Calu3 (cell line): ENCODE measurements at regions of chr12 and their contacts with region 1.

Region 1: DNA sequence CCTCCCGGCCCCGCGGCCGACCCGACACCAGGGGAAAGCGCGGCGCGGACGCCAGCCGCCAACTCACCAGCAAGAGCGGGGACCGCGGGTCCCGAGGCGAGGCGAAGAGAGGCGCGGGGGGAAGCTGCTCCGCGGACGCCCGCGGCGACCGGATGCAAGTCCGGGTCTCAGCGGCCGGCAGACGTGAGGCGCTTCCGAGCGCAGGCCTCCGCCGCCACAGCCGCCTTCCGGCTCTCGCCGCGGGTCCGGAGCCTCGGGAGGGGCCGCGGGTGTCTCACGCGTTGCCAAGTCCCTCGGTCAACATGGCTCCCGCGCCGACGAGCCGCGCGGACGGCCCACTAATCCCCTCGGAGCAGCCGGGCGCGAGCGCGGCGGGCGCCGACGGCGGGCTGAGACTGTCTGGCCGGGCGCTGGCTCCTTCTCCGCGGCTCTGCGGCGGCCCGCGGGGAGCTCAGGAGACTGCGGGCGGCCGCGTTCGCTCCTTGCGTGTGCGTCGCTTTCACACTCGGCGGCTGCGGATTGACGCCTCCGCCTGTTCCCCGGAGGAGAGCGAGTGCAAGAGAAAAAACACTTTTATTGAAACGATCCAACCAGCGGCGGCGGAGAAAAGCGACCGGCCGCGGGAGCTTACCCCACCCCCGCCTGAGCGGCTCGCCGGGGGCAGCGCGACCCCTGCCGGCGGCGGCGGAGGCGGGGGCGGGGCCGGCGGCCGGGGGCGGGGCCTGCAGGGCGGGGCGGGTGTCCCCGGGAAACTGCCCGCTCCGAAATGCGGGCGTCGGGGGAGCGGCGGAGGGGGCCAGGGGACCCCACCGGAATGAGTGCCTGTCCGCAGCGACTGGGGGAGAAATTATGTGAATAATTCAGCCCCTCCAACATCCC is at the start of gene CDK17:
- DNase-seq: peak; percentile 88
- H3K4me3 Mint-ChIP-seq: peak within 1 kb of the TSS; percentile 90
- H3K27ac Mint-ChIP-seq: peak within 1 kb of the TSS; percentile 60
- H3K4me1 Mint-ChIP-seq: peaks cover 26% of the 10 kb centered on the region
- H3K27me3 Mint-ChIP-seq: no peaks in the 10 kb centered on the region
- CTCF ChIP-seq: peak; percentile 15
- total RNA-seq, gene CDK17: 28.8 and 33.0 TPM in 2 replicates

Region 2: DNA sequence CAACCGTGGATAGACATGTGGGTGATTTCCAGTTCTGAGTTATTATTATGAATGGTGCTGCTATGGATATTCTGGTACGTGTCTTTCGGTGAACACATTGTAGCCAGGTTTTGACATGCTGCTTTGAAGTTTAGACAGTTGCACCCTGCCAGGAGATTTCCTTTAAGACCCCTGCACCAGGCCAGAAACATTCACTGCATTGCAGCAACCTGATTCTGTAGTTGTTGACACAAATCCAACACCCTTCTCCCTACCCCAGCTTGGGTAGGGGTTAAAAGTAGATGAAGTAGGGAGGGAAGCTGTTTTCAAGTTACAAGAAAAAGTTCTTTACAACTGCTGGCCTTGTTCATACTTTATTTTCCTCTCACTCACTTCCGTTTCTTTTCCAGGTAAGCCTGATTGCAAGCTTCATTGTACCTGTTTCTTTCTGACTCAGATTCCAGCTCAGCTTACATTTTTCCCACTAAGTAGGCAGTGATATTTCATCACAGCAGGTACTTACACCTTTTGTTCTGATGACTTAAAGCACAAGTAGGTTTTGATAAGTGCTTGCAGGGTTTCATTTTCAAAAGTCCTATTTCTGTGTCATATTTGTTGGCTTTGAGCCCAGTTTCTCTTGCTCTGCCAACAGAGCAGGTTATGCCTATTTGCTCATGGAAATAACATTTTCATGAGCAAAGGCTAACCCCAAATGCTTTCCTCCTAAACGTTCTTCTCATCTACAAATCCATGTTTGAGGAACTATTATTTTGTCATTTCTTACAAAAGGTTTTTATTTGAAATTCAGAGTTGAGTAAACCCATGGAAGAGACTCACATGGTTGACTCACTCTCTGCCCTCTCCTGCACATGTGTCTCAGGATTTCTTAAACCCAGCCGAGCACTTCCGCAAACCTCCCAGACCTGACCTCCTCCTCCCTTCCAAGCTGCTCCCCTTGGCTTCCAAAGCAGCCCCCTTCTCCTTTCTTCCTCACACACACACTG is 352.6 kb before region 1 on chr12:
- CTCF ChIA-PET with region 1: no interaction called
- intact Hi-C with region 1: loop called (anchors 5 kb)
- DNase-seq: peak; percentile 62
- H3K4me3 Mint-ChIP-seq: peak overlapping the region; percentile 60
- H3K27ac Mint-ChIP-seq: peak overlapping the region; percentile 94
- H3K4me1 Mint-ChIP-seq: peaks cover 65% of the 10 kb centered on the region
- H3K27me3 Mint-ChIP-seq: no peaks in the 10 kb centered on the region
- CTCF ChIP-seq: no peak

Region 3: GRCh38 chr12:96219698-96220206 is 180.4 kb before region 1 on chr12:
- CTCF ChIA-PET with region 1: interaction called, 9 read pairs
- intact Hi-C with region 1: loop called (anchors 5 kb)
- DNase-seq: peak; percentile 94
- H3K4me3 Mint-ChIP-seq: peak overlapping the region; percentile 76
- H3K27ac Mint-ChIP-seq: peak overlapping the region; percentile 98
- H3K4me1 Mint-ChIP-seq: peaks cover 39% of the 10 kb centered on the region
- H3K27me3 Mint-ChIP-seq: no peaks in the 10 kb centered on the region
- CTCF ChIP-seq: no peak

Region 4: GRCh38 chr12:96294831-96295230 is 105.3 kb before region 1 on chr12:
- CTCF ChIA-PET with region 1: no interaction called
- intact Hi-C with region 1: loop called (anchors 10 kb)
- DNase-seq: no peak
- H3K4me3 Mint-ChIP-seq: no peak overlapping the region
- H3K27ac Mint-ChIP-seq: no peak overlapping the region
- H3K4me1 Mint-ChIP-seq: no peaks in the 10 kb centered on the region
- H3K27me3 Mint-ChIP-seq: no peaks in the 10 kb centered on the region
- CTCF ChIP-seq: no peak

Region 5: GRCh38 chr12:96343347-96343954 is 56.7 kb before region 1 on chr12:
- CTCF ChIA-PET with region 1: no interaction called
- intact Hi-C with region 1: no loop called
- DNase-seq: no peak
- H3K4me3 Mint-ChIP-seq: no peak overlapping the region
- H3K27ac Mint-ChIP-seq: no peak overlapping the region
- H3K4me1 Mint-ChIP-seq: peaks cover 22% of the 10 kb centered on the region
- H3K27me3 Mint-ChIP-seq: no peaks in the 10 kb centered on the region
- CTCF ChIP-seq: no peak

Region 6: GRCh38 chr12:96489103-96490056 is 89.2 kb after region 1 on chr12 and contains the start of gene CFAP54:
- CTCF ChIA-PET with region 1: interaction called, 3 read pairs
- intact Hi-C with region 1: loop called (anchors 5 kb)
- DNase-seq: peak; percentile 97
- H3K4me3 Mint-ChIP-seq: peak within 1 kb of the TSS; percentile 80
- H3K27ac Mint-ChIP-seq: peak within 1 kb of the TSS; percentile 88
- H3K4me1 Mint-ChIP-seq: no peaks in the 10 kb centered on the region
- H3K27me3 Mint-ChIP-seq: no peaks in the 10 kb centered on the region
- CTCF ChIP-seq: peak; percentile 82
- total RNA-seq, gene CFAP54: 0.35 and 1.2 TPM in 2 replicates

Region 7: DNA sequence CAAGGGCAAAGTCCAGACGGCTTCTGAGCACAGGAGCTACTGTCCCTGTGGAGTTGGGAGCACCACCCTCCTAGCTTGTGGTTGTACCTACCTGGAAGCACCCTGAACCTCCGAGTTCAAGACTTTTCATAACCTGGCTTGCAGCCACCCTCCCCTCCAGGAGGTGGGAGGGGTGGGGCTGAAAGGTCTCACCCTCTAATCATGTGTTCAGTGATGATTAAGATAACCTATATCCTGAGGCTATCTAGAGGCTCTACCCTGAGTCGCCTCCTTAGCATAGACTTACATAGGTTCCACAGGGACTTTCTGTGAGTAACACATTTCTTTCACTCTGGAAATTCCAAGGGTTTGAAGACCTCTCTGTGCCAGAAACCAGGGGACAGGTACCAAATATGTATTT is 235.7 kb after region 1 on chr12:
- CTCF ChIA-PET with region 1: no interaction called
- intact Hi-C with region 1: no loop called
- DNase-seq: no peak
- H3K4me3 Mint-ChIP-seq: no peak overlapping the region
- H3K27ac Mint-ChIP-seq: no peak overlapping the region
- H3K4me1 Mint-ChIP-seq: no peaks in the 10 kb centered on the region
- H3K27me3 Mint-ChIP-seq: no peaks in the 10 kb centered on the region
- CTCF ChIP-seq: no peak